ENCODE measurements at regions of chr14 and their contacts with region 1.

Region 1: DNA sequence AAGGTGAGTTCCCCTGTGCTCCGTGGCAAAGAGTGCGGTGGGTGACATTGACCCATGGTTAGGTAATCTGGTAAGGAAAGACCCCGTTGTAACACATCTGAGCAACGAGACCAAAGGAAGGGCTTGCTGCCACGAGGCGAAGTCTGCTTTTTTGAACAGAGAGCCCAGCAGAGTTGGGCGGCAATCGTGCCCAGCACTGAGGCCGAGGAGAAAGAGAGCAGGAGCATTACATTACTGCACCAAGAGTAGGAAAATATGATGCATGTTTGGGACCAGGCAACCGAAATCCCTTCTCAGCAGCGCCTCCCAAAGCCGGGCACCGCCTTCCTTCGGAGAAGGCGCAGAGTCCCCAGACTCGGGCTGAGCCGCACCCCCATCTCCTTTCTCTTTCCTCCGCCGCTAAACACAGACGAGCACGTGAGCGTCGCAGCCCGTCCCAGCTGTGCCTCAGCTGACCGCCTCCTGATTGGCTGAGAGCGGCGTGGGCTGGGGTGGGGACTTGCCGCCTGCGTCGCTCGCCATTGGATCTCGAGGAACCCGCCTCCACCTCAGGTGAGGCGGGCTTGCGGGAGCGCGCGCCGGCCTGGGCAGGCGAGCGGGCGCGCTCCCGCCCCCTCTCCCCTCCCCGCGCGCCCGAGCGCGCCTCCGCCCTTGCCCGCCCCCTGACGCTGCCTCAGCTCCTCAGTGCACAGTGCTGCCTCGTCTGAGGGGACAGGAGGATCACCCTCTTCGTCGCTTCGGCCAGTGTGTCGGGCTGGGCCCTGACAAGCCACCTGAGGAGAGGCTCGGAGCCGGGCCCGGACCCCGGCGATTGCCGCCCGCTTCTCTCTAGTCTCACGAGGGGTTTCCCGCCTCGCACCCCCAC is at the start of gene HIF1A:
- DNase-seq: peak; percentile 99
- total RNA-seq, gene HIF1A: 131 to 187 TPM

Region 2: DNA sequence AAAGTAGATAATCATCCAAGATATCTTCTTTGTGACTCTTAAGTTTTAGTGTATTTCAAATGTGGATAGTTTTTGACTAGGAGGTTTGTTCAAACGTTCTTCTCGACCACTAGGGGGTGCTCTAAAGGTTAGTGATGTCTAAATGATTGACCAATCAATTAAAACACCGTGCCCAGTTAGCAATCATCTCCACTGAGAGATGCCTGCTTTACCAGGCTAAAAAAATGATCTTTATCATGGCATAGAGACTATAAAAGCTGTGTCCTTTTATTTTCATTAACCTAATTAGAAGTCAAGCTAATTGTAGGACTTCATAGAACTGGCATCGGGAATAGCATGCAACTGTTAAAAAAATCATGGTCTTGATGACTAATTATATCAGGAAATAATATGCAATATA is 219.7 kb before region 1 on chr14:
- intact Hi-C with region 1: loop called in 1 of 2 experiments (anchors 10 kb)
- DNase-seq: no peak